ENCODE measurements at regions of chr7 and their contacts with region 1.

Region 1: DNA sequence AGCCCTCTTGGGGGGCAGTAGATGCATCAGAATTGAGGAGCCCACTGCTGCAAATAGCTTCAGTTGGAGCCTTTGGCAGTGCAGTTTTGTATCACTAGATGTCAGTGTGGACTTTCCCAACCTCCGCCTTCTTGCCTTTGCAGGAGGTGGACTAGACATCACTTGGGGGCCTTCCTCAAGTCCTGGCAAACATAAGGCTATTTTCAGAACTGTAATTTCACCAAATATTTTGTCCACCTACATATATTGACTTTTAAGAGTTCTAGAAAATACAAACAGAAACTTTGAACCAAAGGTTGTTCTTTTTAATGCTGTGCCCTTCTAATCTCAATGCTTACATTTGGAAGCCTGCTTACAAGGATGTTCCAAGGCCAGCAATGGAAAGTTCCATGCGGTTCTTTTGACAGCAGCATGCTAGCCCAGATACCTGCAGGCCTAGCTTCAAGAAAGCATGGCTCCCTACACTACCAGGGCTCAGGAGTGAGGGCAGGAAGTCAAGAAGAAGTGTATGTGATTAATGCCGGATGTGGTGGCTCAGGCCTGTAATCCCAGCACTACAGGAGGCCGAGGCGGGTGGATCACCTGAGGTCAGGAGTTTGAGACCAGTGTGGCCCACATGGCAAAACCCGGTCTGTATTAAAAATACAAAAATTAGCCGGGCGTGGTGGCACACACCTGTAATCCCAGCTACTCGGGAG is 8.0 kb upstream of the ZNRF2 start:
- DNase-seq: peak; percentile 24
- H3K4me3 ChIP-seq: no peak overlapping the region
- CTCF ChIP-seq: peak; percentile 76

Region 2: DNA sequence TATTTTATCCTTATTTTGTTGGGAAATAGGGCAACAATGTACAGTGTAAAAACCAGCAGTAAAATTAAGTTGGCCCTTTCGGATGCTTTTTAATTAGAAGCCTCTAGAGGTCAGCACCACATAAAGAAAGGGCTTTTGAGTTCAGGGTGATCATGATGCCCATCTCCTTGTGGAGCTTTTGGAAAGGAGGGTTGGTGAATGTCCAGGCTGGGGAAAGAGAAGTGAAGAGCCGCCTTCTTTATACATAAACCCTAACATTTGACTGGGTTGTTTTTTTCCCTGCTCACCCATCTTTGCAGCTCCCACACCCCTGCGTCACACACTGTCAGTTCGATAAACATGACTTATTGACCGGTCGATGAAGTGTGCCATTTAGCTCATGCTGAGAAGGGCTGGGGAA is 111.8 kb before region 1 on chr7:
- CTCF ChIA-PET with region 1: interaction called, 11 read pairs
- POLR2A ChIA-PET with region 1: no interaction called
- DNase-seq: no peak
- H3K4me3 ChIP-seq: no peak overlapping the region
- CTCF ChIP-seq: peak; percentile 47

Region 3: GRCh38 chr7:30247545-30248401 is 28.6 kb before region 1 on chr7:
- CTCF ChIA-PET with region 1: no interaction called
- POLR2A ChIA-PET with region 1: no interaction called
- DNase-seq: no peak
- H3K4me3 ChIP-seq: no peak overlapping the region
- CTCF ChIP-seq: no peak

Region 4: DNA sequence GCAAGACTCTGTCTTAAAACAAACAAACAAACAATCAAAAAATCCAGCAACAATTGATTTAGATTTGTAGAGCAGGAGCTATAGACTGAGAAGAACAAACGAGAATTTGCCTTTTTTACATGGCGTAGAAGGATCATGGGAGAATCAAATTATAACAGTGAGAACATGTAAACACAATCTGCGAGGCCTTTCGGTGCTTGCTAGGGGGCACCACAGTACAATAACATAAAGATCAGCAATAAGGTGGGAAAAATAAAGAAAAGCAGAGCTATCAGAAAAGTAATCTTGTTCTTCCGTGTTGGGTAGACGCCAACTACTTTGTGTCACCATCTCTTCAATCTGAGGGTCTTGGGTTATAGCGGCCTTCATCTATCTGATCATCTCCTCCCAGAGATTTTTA is 120.0 kb after region 1 on chr7:
- CTCF ChIA-PET with region 1: interaction called, 10 read pairs
- POLR2A ChIA-PET with region 1: no interaction called
- DNase-seq: no peak
- H3K4me3 ChIP-seq: no peak overlapping the region
- CTCF ChIP-seq: no peak

Region 5: DNA sequence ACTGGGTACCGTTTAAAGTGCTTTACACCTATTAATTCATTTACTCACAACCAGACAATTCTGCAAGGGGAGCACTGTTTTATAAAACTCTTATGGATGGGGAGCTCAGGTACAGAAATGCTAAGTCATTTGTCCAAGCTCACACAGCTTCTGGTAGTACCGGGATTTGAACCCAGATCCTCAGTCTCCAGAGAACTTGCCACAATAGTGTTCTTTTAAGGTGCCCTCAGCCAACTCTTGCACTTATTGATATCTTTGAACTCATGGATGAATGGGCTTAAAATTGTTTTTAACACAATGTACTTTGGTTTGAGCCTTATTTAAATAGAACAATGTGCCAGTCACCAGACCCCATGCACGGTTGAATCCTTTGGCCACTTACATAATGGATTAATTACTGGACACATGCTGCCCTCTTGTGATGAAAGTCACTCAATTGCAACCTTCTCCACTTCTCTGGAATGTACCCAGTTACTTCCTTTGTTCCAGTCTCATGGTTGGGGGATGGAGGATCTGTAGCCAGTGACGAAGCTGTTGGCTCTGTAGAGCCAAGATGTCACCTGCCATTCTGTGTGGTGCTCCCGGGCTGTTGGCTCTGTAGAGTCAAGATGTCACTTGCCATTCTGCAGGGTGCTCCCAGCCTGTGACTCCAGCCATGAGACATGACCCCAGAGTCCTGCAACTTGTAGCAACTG is 136.6 kb after region 1 on chr7:
- CTCF ChIA-PET with region 1: interaction called, 166 read pairs
- POLR2A ChIA-PET with region 1: no interaction called
- DNase-seq: peak; percentile 50
- H3K4me3 ChIP-seq: no peak overlapping the region
- CTCF ChIP-seq: peak; percentile 50

Region 6: DNA sequence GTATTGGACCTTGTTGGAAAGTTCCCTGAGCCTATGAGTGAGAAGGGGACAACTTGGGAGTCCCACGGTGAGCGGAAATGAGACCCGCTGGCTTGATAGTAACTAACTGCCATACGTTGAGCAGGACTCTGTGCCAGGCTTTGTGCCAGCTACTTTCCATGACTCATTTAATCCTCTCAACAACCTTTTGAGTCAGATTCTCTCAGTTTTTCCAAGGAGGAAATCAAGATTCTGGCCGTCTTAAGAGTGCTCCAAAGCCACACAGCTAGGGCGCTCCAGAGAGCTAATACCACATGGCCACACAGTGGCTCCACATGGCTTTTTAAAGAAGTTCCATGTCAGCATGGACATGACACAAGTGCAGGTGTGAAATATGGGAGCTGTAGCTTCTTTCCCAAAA is 146.6 kb after region 1 on chr7:
- CTCF ChIA-PET with region 1: interaction called, 11 read pairs
- POLR2A ChIA-PET with region 1: no interaction called
- DNase-seq: no peak
- H3K4me3 ChIP-seq: no peak overlapping the region
- CTCF ChIP-seq: no peak

Region 7: GRCh38 chr7:30433082-30433481 is 156.7 kb after region 1 on chr7:
- CTCF ChIA-PET with region 1: no interaction called
- POLR2A ChIA-PET with region 1: no interaction called
- DNase-seq: peak; percentile 57
- H3K4me3 ChIP-seq: no peak overlapping the region
- CTCF ChIP-seq: no peak

Measured in AG04449 (cell line).